ENCODE measurements at regions of chr14 and their contacts with region 1.

Region 1: GRCh38 chr14:101791919-101792572 is 30.5 kb downstream of the PPP2R5C start:
- DNase-seq: peak; percentile 31
- H3K4me3 ChIP-seq: no peak overlapping the region
- CTCF ChIP-seq: no peak

Region 2: DNA sequence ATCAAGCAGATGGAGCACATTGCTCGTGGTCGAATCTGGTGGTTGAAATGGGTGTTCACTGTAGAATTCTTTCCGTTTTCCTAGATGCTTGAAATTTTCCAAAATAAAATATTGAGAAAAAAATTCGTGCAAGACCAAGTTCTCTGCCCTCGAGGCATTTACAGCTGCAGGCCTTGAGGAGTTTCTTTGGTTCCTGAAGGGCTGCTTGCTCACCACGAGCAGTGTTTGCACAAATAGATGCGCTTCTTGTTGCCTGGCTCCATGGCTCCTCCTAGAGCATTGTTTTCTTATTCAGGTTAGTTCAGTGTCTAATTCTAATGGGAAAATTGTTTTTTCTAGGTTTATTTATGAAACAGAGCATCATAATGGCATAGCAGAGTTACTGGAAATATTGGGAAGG is 97.9 kb after region 1 on chr14:
- in situ Hi-C with region 1: loop called (anchors 10 kb)
- DNase-seq: no peak
- H3K4me3 ChIP-seq: no peak overlapping the region
- CTCF ChIP-seq: peak; percentile 8

Measured in astrocyte of the cerebellum (primary cell).